ENCODE measurements at regions of chr15 and their contacts with region 1.

Region 1: DNA sequence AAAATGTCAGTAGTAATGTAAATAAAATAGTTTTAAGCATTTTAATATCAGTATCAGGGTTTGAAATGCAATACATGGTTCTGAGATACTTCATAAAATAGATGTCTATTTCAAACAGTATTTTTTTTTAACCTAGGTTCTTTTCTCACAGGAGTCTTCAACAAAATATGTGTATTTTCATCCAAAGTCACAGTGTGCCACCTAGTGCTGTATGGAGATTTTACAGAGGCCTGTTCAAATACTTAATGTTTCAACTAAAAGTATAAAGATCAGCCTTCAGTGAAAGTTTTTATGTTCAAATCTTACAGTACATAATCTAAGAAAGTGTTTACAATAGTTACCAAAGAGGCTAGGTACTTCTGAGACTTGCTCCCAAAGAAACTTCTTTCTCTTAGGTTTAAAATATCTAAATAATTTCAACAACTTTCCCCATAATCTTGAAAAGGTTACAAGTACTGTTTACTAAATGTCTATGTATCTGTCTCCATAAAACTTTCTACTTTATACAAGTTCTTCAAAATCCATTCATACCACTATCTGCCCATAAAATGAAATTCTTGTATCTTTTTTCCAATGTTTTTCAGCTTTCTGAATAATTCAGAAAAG is 38.3 kb downstream of the SCAPER start:
- DNase-seq: peak; percentile 18
- H3K4me3 Mint-ChIP-seq: no peak overlapping the region
- H3K27ac Mint-ChIP-seq: no peak overlapping the region
- H3K4me1 Mint-ChIP-seq: no peaks in the 10 kb centered on the region
- H3K27me3 Mint-ChIP-seq: no peaks in the 10 kb centered on the region
- CTCF ChIP-seq: peak; percentile 18

Region 2: DNA sequence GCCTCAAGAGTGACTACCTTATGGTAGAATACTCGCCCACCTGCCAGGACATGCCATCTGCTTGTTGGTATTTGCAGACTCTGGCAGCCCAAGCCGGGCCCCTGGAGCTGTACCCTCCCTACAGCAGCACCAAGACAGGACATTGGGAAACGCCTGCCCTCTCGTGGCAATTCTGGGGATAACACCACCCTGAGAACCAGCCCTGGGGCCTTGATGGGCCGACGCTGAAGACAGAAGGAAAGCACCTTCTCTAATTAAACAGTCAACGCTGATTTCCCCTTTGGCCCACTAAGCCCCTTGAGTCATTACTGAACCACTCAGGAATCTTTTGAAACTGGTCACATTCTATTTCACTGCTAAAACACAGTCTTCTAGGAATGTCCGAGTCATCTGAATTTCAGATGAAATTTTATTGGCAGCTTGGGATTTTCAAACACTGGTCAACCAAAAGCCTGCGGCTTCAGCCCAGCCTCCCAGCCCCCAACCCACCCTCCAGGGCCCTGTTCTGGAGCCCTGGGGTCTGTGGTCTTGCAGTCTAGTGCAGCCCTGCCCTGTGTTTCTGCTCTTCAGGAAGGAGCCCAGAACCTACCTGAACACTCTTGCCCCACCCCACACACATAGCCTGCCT is 715.7 kb before region 1 on chr15:
- CTCF ChIA-PET with region 1: no interaction called
- intact Hi-C with region 1: loop called (anchors 2 kb)
- DNase-seq: peak; percentile 89
- H3K4me3 Mint-ChIP-seq: no peak overlapping the region
- H3K27ac Mint-ChIP-seq: no peak overlapping the region
- H3K4me1 Mint-ChIP-seq: peaks cover 16% of the 10 kb centered on the region
- H3K27me3 Mint-ChIP-seq: peaks cover 55% of the 10 kb centered on the region
- CTCF ChIP-seq: peak; percentile 92

Region 3: GRCh38 chr15:76185716-76186115 is 681.1 kb before region 1 on chr15:
- CTCF ChIA-PET with region 1: no interaction called
- intact Hi-C with region 1: loop called (anchors 1 kb)
- DNase-seq: peak; percentile 63
- H3K4me3 Mint-ChIP-seq: no peak overlapping the region
- H3K27ac Mint-ChIP-seq: no peak overlapping the region
- H3K4me1 Mint-ChIP-seq: peaks cover 9% of the 10 kb centered on the region
- H3K27me3 Mint-ChIP-seq: peaks cover 35% of the 10 kb centered on the region
- CTCF ChIP-seq: peak; percentile 77

Region 4: DNA sequence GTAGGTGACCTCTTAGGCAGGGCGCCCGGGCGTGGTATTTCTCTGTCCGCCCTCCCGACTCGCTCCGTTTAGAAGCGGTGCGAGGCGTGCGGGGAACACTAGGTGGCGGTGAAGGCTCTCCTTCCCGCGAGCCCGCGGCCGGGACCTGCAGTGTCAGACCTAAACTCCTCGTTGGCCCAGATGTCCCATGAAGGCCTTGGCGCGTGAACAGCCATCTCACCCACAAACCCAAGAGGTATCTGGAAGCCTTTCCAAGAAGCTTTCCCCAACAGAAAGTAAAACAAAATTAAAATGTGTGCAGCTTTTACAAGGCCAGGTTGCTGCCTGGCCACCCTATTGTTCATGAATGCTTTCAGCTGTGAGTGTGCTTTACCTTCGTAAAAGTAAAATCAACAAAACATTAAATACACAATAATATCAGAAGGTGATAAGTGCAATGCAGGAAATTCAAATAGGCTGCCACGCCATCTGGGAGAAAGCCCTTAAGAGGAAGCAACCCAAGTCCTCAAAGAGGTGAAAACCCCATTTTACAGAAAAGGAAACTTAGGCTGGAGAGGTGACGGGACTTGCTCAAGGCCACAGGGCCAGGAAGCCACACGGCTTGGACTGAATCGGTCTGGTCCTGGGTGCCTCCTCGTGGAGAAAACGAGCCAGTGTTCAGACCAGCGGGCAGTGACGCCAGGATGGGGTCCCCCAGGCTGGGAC is 675.8 kb before region 1 on chr15:
- CTCF ChIA-PET with region 1: no interaction called
- intact Hi-C with region 1: loop called (anchors 1 kb)
- DNase-seq: peak; percentile 88
- H3K4me3 Mint-ChIP-seq: peak overlapping the region; percentile 39
- H3K27ac Mint-ChIP-seq: peak overlapping the region; percentile 10
- H3K4me1 Mint-ChIP-seq: peaks cover 19% of the 10 kb centered on the region
- H3K27me3 Mint-ChIP-seq: peaks cover 23% of the 10 kb centered on the region
- CTCF ChIP-seq: peak; percentile 87

Region 5: GRCh38 chr15:76235186-76235826 is 631.5 kb before region 1 on chr15:
- CTCF ChIA-PET with region 1: no interaction called
- intact Hi-C with region 1: loop called (anchors 2 kb)
- DNase-seq: no peak
- H3K4me3 Mint-ChIP-seq: no peak overlapping the region
- H3K27ac Mint-ChIP-seq: no peak overlapping the region
- H3K4me1 Mint-ChIP-seq: no peaks in the 10 kb centered on the region
- H3K27me3 Mint-ChIP-seq: no peaks in the 10 kb centered on the region
- CTCF ChIP-seq: peak; percentile 9

Measured in Calu3 (cell line).